Colonic mucosa (tissue), 4 donors: ENCODE measurements at regions of chr14 and their contacts with region 1.

Region 1: GRCh38 chr14:33839193-33840076 is 111.4 kb downstream of the EGLN3 start:
- DNase-seq: peak; percentile 65
- H3K4me3 ChIP-seq: no peak overlapping the region
- H3K27ac ChIP-seq: no peak overlapping the region
- H3K4me1 ChIP-seq: no peaks in the 10 kb centered on the region
- H3K27me3 ChIP-seq: no peaks in the 10 kb centered on the region
- CTCF ChIP-seq: peak; percentile 79

Region 2: GRCh38 chr14:33908540-33909223 is 69.2 kb after region 1 on chr14:
- intact Hi-C with region 1: loop called (anchors 10 kb)
- DNase-seq: peak; percentile 79
- H3K4me3 ChIP-seq: no peak overlapping the region
- H3K27ac ChIP-seq: peak overlapping the region; percentile 77
- H3K4me1 ChIP-seq: no peaks in the 10 kb centered on the region
- H3K27me3 ChIP-seq: no peaks in the 10 kb centered on the region
- CTCF ChIP-seq: peak; percentile 49

Region 3: DNA sequence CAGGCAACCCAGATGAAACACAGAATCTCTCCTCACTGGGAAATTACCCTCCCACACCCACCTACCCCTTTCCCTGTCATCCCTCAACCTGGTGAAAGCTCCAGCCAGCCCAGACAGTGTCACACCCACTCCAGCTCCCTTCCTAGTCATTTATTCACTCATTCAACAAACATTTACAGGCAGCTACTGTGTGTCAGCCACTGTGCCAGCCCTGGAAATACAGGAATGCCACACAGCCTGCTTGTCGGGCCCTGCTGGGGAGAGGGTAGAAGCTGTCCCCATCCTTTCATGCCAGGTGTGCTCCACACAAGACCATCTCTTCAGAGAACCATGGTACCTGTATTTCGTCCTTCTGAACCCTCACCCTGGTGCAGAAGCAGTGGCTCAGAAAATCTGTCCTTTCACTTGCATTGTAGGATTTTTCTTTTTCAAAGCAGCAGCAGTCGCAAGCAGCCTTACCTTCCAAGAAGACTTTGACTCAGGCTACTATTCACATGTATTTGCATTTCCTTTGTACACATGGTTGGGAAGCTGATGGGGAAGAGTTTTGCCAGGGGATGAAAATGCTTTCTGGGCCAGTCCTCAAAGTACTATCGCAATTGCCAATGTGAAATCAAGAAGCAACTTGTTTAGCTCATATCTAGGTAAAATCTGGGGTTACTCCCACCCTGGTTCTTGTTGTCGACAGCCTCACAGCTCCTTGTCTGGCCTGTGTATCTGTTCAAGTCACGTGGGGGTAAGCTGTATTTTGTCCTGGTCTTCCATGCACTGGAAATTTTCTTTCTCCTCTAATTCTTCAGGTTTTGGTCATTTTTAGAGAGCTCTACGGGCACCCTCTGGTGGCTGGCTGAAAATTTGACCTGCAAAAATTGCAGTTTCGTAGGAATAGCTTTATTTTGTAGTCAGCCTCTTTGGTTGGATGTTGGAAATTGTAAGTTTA is 258.9 kb after region 1 on chr14:
- intact Hi-C with region 1: loop called (anchors 2 kb)
- DNase-seq: peak; percentile 48
- H3K4me3 ChIP-seq: no peak overlapping the region
- H3K27ac ChIP-seq: no peak overlapping the region
- H3K4me1 ChIP-seq: peaks cover 4% of the 10 kb centered on the region
- H3K27me3 ChIP-seq: no peaks in the 10 kb centered on the region
- CTCF ChIP-seq: peak; percentile 35

Region 4: DNA sequence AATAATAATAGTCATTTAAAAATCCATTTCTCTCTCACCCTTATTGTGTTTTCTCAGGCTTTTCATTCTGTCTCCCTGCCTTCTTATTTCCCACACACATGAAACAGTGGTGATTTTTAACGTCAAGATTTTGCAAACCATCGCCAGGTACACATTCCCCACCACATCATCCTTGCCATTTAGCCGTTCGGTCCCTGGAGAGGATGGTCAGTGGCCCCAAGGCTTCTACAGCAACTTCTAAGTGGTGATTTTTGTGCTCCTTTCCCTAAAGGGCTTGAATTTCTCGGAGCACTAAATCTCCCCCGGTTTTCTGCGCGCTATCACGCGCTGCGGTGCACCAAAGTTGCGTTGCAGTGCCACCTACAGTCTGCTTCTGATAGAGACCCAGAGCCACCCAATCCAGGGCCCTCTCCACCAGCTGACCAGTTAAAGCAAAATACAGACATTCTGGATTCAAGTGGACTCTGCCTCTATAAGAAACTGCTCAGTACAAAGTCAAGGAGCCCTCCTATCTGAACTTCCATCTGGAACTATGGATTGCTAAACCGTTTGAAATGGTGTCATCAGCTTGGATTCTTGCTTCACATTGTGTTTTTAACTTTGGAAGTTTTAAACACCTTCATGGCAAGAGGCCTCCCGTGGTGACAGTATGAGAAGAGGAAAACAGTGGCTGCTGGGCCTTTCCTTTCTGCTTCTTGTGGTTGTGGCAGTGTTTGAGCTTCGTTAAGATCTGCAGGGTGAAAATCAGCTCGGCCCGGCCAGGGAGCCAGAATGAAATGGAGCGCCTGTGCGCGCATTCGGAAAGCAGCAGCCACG is 388.6 kb after region 1 on chr14:
- intact Hi-C with region 1: loop called (anchors 5 kb)
- DNase-seq: peak; percentile 80
- H3K4me3 ChIP-seq: no peak overlapping the region
- H3K27ac ChIP-seq: peak overlapping the region; percentile 43
- H3K4me1 ChIP-seq: peaks cover 9% of the 10 kb centered on the region
- H3K27me3 ChIP-seq: no peaks in the 10 kb centered on the region
- CTCF ChIP-seq: peak; percentile 65

Region 5: GRCh38 chr14:34300882-34301734 is 461.7 kb after region 1 on chr14:
- intact Hi-C with region 1: loop called (anchors 5 kb)
- DNase-seq: peak; percentile 37
- H3K4me3 ChIP-seq: no peak overlapping the region
- H3K27ac ChIP-seq: no peak overlapping the region
- H3K4me1 ChIP-seq: no peaks in the 10 kb centered on the region
- H3K27me3 ChIP-seq: no peaks in the 10 kb centered on the region
- CTCF ChIP-seq: peak; percentile 51